HepG2 (cell line): ENCODE measurements at regions of chr6 and their contacts with region 1.

Region 1: DNA sequence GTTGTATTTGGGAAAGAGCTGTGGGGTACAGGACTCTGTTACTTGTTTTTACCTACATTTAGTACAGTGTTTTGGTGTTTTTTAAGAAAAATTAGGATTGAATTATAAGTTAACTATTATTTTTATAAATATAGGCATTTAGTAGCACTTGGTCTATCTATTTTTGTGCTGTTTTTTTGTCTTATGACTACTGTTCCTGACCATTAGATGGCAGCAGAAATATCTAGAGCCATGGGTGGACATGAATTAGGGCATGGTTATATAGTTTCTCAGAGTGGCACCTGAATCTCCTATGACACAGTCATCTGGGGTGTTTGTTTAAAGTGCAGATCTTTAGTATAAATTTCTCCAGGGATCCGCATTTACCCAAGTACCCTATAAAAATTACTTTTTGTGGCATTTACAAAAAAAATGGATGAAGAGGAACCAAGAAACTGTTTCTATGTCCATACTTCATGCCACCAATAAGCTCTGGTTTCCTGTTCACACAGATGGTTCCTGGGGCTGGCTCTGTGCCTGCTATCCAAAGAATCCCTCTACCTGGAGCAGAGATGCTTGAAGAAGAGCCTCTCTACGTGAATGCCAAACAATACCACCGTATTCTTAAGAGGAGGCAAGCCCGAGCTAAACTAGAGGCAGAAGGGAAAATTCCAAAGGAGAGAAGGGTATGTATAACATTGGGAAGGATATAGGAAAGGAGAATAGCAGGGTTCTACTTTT is 19.8 kb downstream of the NFYA start:
- DNase-seq: peak; percentile 41
- ATAC-seq: peak; percentile 56; the same call in 2 of the 3 replicates
- H3K4me3 ChIP-seq: no peak overlapping the region
- H3K27ac ChIP-seq: no peak overlapping the region
- H3K4me1 ChIP-seq: no peaks in the 10 kb centered on the region
- H3K27me3 ChIP-seq: no peaks in the 10 kb centered on the region
- CTCF ChIP-seq: peak; percentile 46; the same call in 1 of the 2 replicates
- EP300 ChIP-seq: no peak
- POLR2A ChIP-seq: no peak
- RAD21 ChIP-seq: no peak

Region 2: GRCh38 chr6:41182069-41183034 is 89.8 kb after region 1 on chr6:
- CTCF ChIA-PET with region 1: interaction called, 19 read pairs
- POLR2A ChIA-PET with region 1: no interaction called
- in situ Hi-C with region 1: loop called (anchors 5 kb)
- intact Hi-C with region 1: loop called (anchors 1 kb)
- DNase-seq: peak; percentile 59
- ATAC-seq: peak; percentile 90
- H3K4me3 ChIP-seq: no peak overlapping the region
- H3K27ac ChIP-seq: no peak overlapping the region
- H3K4me1 ChIP-seq: peaks cover 11% of the 10 kb centered on the region
- H3K27me3 ChIP-seq: peaks cover 5 to 27% of the 10 kb centered on the region in 2 experiments; a peak in 4 of 5 replicates
- CTCF ChIP-seq: peak; percentile 70
- EP300 ChIP-seq: no peak
- POLR2A ChIP-seq: no peak
- RAD21 ChIP-seq: peak; percentile 39; the same call in 1 of the 2 replicates

Region 3: DNA sequence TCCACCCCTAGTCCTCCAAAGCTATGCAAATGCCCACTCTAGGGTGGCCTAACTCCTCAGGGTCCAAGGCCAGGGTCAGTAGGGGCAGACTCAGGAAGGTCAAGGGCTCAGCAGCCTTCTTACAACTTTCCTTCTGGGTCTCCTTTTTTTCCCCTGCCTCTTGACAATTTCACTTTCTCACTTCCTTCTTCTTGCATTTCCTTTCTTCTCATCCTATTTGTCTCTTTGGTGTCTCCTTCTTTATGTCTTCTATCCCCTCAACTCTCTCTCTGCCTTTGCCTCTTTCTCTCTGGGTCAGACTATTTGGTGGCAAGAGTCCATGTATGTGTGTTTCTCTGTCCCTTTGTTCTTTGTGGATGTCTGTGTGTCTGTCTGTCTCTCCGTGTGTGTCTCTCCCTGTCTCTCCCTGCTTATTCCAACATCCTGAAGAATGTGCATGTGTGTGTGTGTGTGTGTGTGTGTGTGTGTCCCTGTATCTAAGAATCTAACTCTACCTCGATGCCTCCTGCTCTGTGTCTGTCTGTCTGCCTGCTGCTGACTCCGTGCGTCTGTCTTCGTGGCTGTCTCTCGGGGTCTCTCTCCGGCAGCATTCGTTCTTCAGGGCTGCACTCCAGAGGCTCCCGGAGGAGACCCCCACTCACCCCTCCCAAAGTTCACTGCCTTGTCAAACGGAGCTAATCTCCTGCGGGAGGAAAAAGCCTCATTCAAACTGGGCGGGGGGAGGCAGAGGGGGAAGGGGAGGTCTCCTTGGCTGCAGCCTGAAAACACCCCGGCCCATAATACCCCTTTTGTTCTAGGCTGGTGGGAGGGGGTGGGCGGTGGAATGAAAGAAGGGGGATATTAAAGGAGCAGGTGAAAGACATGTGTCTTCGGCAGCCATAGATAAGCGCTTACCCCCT is 401.9 kb after region 1 on chr6:
- CTCF ChIA-PET with region 1: no interaction called
- POLR2A ChIA-PET with region 1: no interaction called
- in situ Hi-C with region 1: no loop called
- intact Hi-C with region 1: no loop called
- DNase-seq: no peak
- ATAC-seq: no peak
- H3K4me3 ChIP-seq: peak overlapping the region in 2 of 3 experiments; percentile 29 to 45; a peak in 3 of 6 replicates
- H3K27ac ChIP-seq: no peak overlapping the region
- H3K4me1 ChIP-seq: peaks cover 69% of the 10 kb centered on the region
- H3K27me3 ChIP-seq: peaks cover 3 to 8% of the 10 kb centered on the region in 2 experiments; a peak in 3 of 5 replicates
- CTCF ChIP-seq: no peak
- EP300 ChIP-seq: 0 out of 4 replicates have a peak, but pooled peaks of 1 of the 2 experiments have one; percentile 5
- POLR2A ChIP-seq: no peak
- RAD21 ChIP-seq: no peak